Activated naive CD4-positive, alpha-beta T cell treated with anti-CD3 and anti-CD28 coated beads for 36 hours (primary cell): ENCODE measurements at regions of chr2 and their contacts with region 1.

Region 1: DNA sequence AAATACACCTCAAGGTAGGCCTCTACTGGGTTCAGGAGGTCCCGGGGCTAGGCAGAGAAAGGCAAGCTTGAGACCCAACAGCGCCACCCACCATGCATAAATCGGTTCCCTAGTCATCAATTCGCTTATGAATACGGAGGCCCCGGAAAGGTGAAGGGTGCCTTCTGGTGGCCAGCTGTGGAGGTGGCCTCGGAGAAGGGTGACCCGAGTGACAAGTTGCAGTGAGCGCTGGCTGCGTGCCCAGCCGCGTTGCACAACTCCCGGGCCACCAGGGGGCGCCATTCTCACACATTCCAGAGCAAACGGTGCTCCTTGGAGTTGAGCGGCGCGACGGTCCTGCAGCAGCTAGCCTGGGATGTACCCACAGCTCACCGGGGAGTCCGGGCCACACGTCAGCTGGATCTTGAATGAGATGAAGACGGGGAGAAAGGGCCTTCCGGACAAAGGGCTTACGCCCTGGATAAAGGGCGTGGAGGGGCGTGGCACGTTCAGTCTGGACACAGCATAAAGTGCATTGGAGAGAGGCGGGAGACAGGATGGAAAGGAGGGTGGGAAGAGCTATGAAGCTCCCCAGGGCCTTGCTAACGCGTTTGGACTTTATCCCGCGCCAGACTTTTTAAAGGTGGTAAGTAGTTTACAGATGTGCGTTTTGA is 20.4 kb downstream of the TMSB10 start:
- DNase-seq: peak; percentile 100
- H3K4me3 Mint-ChIP-seq: peak overlapping the region; percentile 87
- H3K27ac Mint-ChIP-seq: peak overlapping the region; percentile 97
- H3K4me1 Mint-ChIP-seq: peaks cover 49% of the 10 kb centered on the region
- H3K27me3 Mint-ChIP-seq: no peaks in the 10 kb centered on the region

Region 2: DNA sequence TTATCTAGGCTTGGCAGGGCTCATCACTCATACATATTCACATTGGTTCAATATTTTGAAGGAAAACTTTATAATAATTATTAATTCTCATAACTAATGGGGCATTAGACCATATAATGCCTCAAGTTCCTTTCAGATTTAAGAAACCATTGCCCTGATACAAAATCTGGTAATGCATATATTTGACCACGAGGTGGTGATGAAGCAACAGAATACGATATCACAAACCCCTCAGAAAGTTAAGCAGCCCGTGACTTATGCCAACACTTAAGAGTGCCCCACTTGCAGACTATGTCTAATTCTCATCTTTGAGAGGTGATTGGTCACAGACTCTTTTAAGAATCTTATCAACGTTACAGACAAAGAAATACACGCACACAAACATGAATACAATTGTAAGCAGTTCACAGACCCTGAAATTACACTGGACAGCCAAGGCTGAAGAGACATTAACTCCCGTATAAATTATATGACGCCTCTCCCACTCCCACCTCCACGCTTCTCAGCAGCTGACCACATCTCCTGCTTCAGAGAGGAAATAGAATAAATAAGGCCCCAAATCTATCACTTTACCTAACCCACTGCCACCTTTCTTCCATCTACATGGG is 430.2 kb before region 1 on chr2:
- CTCF ChIA-PET with region 1: interaction called, 34 read pairs
- intact Hi-C with region 1: loop called (anchors 1 kb)
- DNase-seq: peak; percentile 45
- H3K4me3 Mint-ChIP-seq: no peak overlapping the region
- H3K27ac Mint-ChIP-seq: no peak overlapping the region
- H3K4me1 Mint-ChIP-seq: peaks cover 24% of the 10 kb centered on the region
- H3K27me3 Mint-ChIP-seq: no peaks in the 10 kb centered on the region

Region 3: DNA sequence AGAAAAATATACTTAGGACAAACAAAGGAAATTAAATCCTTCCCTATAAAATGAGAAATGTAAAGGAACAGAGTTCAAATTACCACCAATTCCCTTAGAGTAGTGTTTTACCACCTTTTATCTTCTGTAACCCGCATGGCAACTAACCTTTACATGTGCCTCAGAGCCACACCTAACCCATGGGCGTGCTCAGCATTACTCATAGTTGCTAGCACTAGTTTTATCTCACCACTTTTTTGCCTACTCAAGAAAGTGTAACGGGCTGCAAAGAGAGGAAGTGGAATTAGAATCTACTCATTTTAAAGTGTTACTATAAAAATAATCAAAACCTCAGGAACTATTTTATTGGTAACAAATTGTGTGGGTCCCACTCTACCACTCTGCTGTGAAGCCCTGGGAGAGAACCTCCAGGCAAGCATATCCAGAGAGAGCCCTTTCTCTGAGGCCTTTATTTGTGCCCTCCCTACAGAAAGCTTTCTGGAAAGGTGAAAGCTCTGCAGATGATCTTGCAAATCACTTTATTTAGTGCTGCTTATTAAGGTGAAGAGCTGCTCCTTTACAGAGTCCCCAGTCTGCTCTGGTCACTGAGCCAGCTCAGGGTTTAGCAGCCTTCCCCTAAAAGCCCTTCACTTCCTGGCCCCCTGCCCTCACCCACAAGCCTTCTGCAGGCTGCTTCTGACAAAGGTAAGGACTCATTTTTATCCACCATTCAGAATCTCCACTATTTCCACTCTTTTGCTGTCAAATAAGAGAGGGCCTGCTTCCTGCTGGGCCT is 143.7 kb before region 1 on chr2:
- CTCF ChIA-PET with region 1: interaction called, 6 read pairs
- intact Hi-C with region 1: loop called (anchors 2 kb)
- DNase-seq: peak; percentile 78
- H3K4me3 Mint-ChIP-seq: no peak overlapping the region
- H3K27ac Mint-ChIP-seq: peak overlapping the region; percentile 83
- H3K4me1 Mint-ChIP-seq: peaks cover 68% of the 10 kb centered on the region
- H3K27me3 Mint-ChIP-seq: no peaks in the 10 kb centered on the region

Region 4: GRCh38 chr2:84881581-84882414 is 44.1 kb before region 1 on chr2:
- CTCF ChIA-PET with region 1: interaction called, 75 read pairs
- intact Hi-C with region 1: loop called (anchors 1 kb)
- DNase-seq: peak; percentile 97
- H3K4me3 Mint-ChIP-seq: peak overlapping the region; percentile 87
- H3K27ac Mint-ChIP-seq: peak overlapping the region; percentile 97
- H3K4me1 Mint-ChIP-seq: peaks cover 51% of the 10 kb centered on the region
- H3K27me3 Mint-ChIP-seq: no peaks in the 10 kb centered on the region

Region 5: DNA sequence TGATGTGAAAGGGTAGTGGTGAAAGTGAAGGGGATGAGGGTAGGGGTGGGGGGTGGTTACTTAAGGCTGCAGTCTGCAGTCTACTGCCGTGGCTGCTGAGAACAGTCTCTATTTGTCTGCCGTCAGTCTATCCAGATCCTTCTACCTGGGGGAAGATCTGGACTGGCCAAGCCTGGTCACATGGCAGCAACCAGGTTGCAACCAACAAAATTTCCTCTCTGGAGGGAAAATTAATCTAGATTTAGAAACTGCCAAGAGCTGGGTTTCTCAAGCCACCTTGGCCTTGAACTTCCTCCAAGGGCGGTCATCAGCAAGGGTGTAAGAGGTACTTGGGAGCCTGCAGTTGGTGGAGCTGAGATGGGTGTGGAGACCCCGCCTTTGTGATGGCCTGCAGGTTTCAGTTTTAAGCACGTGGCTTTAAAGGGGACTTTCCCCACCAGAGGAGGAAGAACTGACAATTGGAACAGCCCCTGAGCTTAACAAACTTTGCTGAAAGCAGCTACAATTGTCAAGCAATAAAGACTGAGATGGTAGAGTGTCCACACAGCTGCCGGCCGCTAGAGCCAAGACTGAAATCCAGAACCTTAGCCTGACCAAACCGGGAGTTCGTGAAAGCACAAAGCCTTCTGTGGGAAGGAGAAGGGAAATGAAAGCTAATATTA is 13.7 kb after region 1 on chr2:
- CTCF ChIA-PET with region 1: interaction called, 81 read pairs
- intact Hi-C with region 1: loop called (anchors 1 kb)
- DNase-seq: peak; percentile 78
- H3K4me3 Mint-ChIP-seq: peak overlapping the region; percentile 72
- H3K27ac Mint-ChIP-seq: peak overlapping the region; percentile 99
- H3K4me1 Mint-ChIP-seq: peaks cover 75% of the 10 kb centered on the region
- H3K27me3 Mint-ChIP-seq: no peaks in the 10 kb centered on the region

Region 6: GRCh38 chr2:85017411-85018048 is 91.7 kb after region 1 on chr2:
- CTCF ChIA-PET with region 1: interaction called, 90 read pairs
- intact Hi-C with region 1: loop called (anchors 1 kb)
- DNase-seq: no peak
- H3K4me3 Mint-ChIP-seq: no peak overlapping the region
- H3K27ac Mint-ChIP-seq: peak overlapping the region; percentile 66
- H3K4me1 Mint-ChIP-seq: peaks cover 72% of the 10 kb centered on the region
- H3K27me3 Mint-ChIP-seq: no peaks in the 10 kb centered on the region